Ascending aorta (tissue), 2 donors: ENCODE measurements at regions of chr11 and their contacts with region 1.

Region 1: GRCh38 chr11:13335319-13335718 is 57.7 kb downstream of the BMAL1 start:
- DNase-seq: peak in 1 of 2 donors; percentile 82
- H3K4me3 ChIP-seq: no peak overlapping the region
- H3K27ac ChIP-seq: no peak overlapping the region
- H3K4me1 ChIP-seq: peaks cover 2 to 19% of the 10 kb centered on the region in 2 donors
- H3K27me3 ChIP-seq: no peaks in the 10 kb centered on the region
- CTCF ChIP-seq: peak; percentile 56 to 84 (median 72)

Region 2: GRCh38 chr11:13210424-13210823 is 124.9 kb before region 1 on chr11:
- intact Hi-C with region 1: loop called (anchors 2 kb)
- DNase-seq: peak in 1 of 2 donors; percentile 72
- H3K4me3 ChIP-seq: no peak overlapping the region
- H3K27ac ChIP-seq: no peak overlapping the region
- H3K4me1 ChIP-seq: no peaks in the 10 kb centered on the region
- H3K27me3 ChIP-seq: no peaks in the 10 kb centered on the region
- CTCF ChIP-seq: peak; percentile 49 to 67 (median 55)